PC-9 (cell line): ENCODE measurements at regions of chr3 and their contacts with region 1.

Region 1: DNA sequence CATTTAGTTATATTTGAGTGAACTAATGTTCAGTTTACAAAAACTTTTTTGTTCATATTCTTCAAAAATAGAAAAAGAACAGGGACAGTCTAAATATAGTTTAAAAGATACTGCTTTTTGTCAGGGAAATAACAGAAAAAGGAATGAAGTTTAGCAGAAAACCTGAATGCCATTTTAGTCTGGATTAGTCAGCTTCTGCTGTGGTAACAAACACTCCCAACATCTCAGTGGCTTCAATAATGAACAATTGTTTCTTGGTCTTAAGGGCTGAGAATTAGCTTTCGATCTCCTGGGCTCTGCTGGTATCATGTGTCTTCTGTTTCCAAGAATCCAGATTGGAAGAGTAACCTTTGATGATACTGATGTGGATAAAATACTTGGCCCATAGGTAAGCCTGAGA is 12.4 kb upstream of the USP13 start:
- DNase-seq: no peak
- H3K4me3 ChIP-seq: no peak overlapping the region
- H3K27ac ChIP-seq: no peak overlapping the region
- H3K4me1 ChIP-seq: peaks cover 15% of the 10 kb centered on the region
- H3K27me3 ChIP-seq: no peaks in the 10 kb centered on the region
- CTCF ChIP-seq: no peak

Region 2: GRCh38 chr3:179503626-179504025 is 136.8 kb before region 1 on chr3:
- CTCF ChIA-PET with region 1: interaction called, 13 read pairs
- POLR2A ChIA-PET with region 1: no interaction called
- intact Hi-C with region 1: no loop called
- DNase-seq: no peak
- H3K4me3 ChIP-seq: no peak overlapping the region
- H3K27ac ChIP-seq: no peak overlapping the region
- H3K4me1 ChIP-seq: no peaks in the 10 kb centered on the region
- H3K27me3 ChIP-seq: no peaks in the 10 kb centered on the region
- CTCF ChIP-seq: no peak

Region 3: DNA sequence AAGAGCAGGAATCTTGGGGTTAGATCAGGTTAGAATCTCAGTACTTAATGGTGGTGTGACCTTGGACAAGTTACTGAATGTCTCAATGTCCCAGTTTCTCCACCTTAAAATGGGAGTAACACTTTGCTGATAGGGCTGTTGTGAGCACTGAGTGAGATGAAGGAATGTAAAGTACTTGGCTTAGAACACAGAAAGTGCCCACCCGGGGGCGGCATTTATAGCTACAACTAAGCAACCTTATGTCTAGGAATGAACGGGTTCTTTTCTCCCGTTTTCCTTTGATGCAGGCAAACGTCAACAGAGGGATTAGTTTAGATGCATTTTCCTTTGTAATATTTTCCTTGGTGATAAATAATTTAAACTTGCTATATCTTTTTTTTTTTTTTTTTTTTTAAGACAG is 188.9 kb after region 1 on chr3:
- CTCF ChIA-PET with region 1: no interaction called
- POLR2A ChIA-PET with region 1: no interaction called
- intact Hi-C with region 1: no loop called
- DNase-seq: no peak
- H3K4me3 ChIP-seq: no peak overlapping the region
- H3K27ac ChIP-seq: no peak overlapping the region
- H3K4me1 ChIP-seq: no peaks in the 10 kb centered on the region
- H3K27me3 ChIP-seq: no peaks in the 10 kb centered on the region
- CTCF ChIP-seq: no peak